Dendritic cell treated with granulocyte-macrophage colony-stimulating factor and Interleukin-4, amounts not matched to agents 40 ng/mL and 50 ng/mL, for 4 days (primary cell): ENCODE measurements at regions of chr22 and their contacts with region 1.

Region 1: GRCh38 chr22:39900306-39901227 is at the start of gene GRAP2:
- H3K4me3 Mint-ChIP-seq: no peak within 1 kb of the TSS
- H3K27ac Mint-ChIP-seq: peak within 1 kb of the TSS; percentile 34
- H3K4me1 Mint-ChIP-seq: peaks cover 23% of the 10 kb centered on the region
- H3K27me3 Mint-ChIP-seq: peaks cover 2% of the 10 kb centered on the region

Region 2: GRCh38 chr22:39839917-39840510 is 60.6 kb before region 1 on chr22:
- intact Hi-C with region 1: loop called (anchors 2 kb)
- H3K4me3 Mint-ChIP-seq: no peak overlapping the region
- H3K27ac Mint-ChIP-seq: no peak overlapping the region
- H3K4me1 Mint-ChIP-seq: peaks cover 16% of the 10 kb centered on the region
- H3K27me3 Mint-ChIP-seq: peaks cover 49% of the 10 kb centered on the region